PC-3 (cell line): ENCODE measurements at regions of chr11 and their contacts with region 1.

Region 1: DNA sequence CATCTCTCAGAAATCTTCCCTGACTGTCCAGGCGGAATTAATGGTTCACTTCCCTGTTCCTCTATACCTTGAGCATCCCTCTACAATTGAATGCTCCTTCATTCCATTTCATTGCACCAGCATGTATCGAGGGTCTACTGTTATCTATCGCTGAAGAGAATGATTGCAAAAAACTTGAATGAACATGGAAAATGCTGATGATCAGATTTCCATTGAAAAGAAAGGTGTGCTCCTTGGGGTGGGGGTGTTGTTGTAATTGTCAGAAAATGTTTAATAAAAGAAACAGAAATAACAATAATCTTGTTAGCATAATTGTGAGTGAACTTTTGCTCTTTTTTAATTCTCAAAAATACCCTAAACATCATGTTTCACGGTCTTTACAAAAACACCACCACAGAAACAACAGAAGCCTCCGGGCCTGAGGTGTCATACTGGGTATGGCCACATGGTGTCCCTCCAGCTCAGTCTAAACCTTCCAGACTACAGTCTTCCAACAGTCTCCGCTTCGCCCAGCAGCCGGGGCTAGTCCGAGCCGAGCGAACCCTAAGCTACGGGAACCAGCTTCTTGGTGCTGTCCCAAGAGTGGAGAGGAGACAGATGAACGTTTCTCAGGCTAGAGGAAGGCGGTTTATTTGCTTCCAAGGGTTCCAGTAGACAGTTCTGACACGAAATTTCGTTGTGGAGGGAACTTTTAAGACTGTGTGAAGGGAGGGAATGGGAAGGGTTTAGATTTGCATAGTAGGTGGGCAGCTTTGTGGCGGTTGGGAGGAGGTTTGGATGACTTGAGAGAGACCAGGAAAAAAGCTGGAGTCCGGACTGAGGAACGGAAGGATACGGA is 75.8 kb upstream of the ZBED5 start:
- DNase-seq: peak; percentile 92
- ATAC-seq: peak; percentile 66
- H3K4me3 ChIP-seq: peak overlapping the region; percentile 68
- H3K27ac ChIP-seq: peak overlapping the region; percentile 39
- H3K4me1 ChIP-seq: peaks cover 42% of the 10 kb centered on the region
- H3K27me3 ChIP-seq: no peaks in the 10 kb centered on the region
- CTCF ChIP-seq: peak; percentile 94

Region 2: GRCh38 chr11:10792398-10792975 is 141.2 kb before region 1 on chr11:
- CTCF ChIA-PET with region 1: interaction called, 13 read pairs
- POLR2A ChIA-PET with region 1: interaction called, 4 read pairs
- intact Hi-C with region 1: loop called (anchors 1 kb)
- DNase-seq: peak; percentile 88
- ATAC-seq: peak; percentile 87
- H3K4me3 ChIP-seq: peak overlapping the region; percentile 28; the same call in 1 of the 2 replicates
- H3K27ac ChIP-seq: no peak overlapping the region
- H3K4me1 ChIP-seq: peaks cover 16% of the 10 kb centered on the region
- H3K27me3 ChIP-seq: no peaks in the 10 kb centered on the region
- CTCF ChIP-seq: peak; percentile 92

Region 3: DNA sequence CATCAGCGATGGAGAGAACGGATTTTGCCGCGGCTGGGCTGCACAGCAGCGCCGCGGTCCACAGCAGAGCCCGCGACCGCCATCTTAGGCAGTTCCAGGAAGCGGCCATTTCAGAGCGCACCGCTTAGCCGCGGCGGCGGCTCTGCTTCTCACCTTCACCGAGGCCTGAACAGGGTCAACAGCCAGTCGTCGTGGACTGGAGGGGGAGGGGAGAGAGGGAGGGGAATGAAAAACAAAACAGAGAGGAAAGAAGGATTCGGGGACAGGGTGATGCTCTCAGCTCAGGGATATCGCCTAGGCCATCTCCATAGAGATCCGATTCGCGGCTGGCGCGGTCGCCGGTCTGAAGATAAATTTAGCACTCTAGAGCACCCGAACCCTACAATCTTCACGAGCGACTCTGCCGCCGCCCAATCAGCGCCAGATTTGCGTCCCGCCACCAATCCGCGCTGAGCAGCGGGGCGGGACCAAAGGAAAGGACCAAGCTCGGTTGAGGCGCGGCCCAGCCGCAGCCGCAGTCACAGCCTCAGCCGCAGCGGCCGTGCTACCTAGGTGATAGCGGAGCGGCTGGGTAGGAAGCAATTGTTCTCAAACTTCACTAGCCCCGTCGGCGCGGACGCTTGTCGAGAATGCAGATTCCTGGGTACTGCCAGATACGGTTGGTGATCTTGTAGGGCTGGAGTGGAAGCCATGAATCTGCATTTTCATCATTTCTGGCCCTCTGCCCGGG is 75.8 kb before region 1 on chr11 and contains the start of gene ZBED5:
- CTCF ChIA-PET with region 1: interaction called, 3 read pairs
- POLR2A ChIA-PET with region 1: no interaction called
- intact Hi-C with region 1: loop called (anchors 1 kb)
- DNase-seq: peak; percentile 97
- ATAC-seq: peak; percentile 93
- H3K4me3 ChIP-seq: peak within 1 kb of the TSS; percentile 76
- H3K27ac ChIP-seq: peak within 1 kb of the TSS; percentile 91
- H3K4me1 ChIP-seq: peaks cover 38% of the 10 kb centered on the region
- H3K27me3 ChIP-seq: no peaks in the 10 kb centered on the region
- CTCF ChIP-seq: no peak; the same call in 1 of the 2 replicates
- total RNA-seq, gene ZBED5: 19.5 and 21.0 TPM in 2 replicates

Region 4: DNA sequence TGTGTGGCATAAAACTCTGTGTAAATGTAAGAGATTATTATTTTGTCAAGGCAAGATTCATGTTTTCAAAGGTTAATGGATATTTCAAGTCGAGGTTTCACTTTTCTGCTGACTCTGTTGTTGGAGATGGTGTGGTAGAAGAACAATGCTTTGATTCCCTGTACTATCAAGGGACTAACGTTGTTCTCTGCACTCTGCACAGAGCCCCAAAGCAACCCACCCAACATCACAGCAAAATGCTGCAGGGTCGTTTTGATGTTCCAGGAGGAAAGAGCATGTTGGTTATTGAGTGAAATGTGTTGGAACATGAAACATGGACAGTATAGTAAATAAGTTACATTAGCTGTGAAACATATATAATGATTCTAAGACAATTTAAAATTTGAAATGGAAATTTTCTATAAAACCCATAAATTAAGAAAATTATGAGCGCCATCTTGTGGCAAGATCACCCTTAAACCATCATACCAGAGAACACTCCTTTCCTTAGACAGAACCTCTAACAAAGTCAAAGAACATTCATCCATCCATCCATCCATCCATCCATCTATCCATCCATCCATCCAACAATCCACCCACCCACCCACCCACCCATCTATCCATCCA is 88.6 kb after region 1 on chr11:
- CTCF ChIA-PET with region 1: interaction called, 47 read pairs
- POLR2A ChIA-PET with region 1: interaction called, 5 read pairs
- intact Hi-C with region 1: loop called (anchors 1 kb)
- DNase-seq: peak; percentile 57
- ATAC-seq: peak; percentile 34; the same call in 1 of the 2 replicates
- H3K4me3 ChIP-seq: no peak overlapping the region
- H3K27ac ChIP-seq: no peak overlapping the region
- H3K4me1 ChIP-seq: peaks cover 6% of the 10 kb centered on the region
- H3K27me3 ChIP-seq: no peaks in the 10 kb centered on the region
- CTCF ChIP-seq: peak; percentile 56

Region 5: DNA sequence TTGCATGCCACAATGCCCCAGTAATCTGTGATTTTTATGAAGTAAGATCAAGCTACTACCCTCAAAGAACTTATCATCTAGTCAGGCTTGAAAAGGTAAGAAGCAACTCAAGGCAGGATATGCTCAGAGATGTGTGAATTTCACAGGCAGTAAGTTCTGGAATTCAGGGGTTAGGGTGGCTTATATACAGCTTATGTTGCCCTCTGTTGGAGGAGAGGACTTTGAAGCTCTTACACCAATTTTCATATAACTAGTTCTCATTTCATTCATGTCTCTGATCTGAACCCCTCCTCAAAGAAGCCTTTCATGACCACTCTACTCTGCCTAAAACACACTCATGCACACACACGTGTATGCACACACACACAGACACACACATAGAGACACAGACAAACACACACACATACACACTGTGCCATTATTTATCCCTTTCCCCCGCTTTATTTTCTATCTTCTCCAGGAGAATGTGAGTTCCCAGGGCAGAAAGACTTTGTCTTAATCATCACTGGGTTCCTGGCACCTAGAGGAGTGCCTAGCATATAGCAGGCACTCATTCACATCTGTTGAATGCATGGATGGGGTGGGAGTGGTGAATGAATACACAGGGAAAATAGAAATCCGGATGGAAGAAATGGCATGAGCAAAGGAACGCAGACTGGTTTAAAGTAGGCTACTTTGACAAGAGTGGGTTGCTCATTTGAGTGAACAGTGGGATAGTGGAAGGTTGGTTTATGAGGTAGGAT is 144.8 kb after region 1 on chr11:
- CTCF ChIA-PET with region 1: no interaction called
- POLR2A ChIA-PET with region 1: no interaction called
- intact Hi-C with region 1: loop called (anchors 5 kb)
- DNase-seq: peak; percentile 23
- ATAC-seq: peak; percentile 51
- H3K4me3 ChIP-seq: no peak overlapping the region
- H3K27ac ChIP-seq: no peak overlapping the region
- H3K4me1 ChIP-seq: no peaks in the 10 kb centered on the region
- H3K27me3 ChIP-seq: peaks cover 29% of the 10 kb centered on the region
- CTCF ChIP-seq: peak; percentile 45; the same call in 1 of the 2 replicates